ENCODE measurements at regions of chr17 and their contacts with region 1.

Region 1: GRCh38 chr17:82332669-82333278 is 792 bp downstream of the SECTM1 start:
- DNase-seq: peak; percentile 42
- ATAC-seq: peak; percentile 37
- H3K4me3 Mint-ChIP-seq: peak overlapping the region; percentile 66
- H3K27ac Mint-ChIP-seq: peak overlapping the region; percentile 43
- H3K4me1 Mint-ChIP-seq: peaks cover 31% of the 10 kb centered on the region
- H3K27me3 Mint-ChIP-seq: peaks cover 7% of the 10 kb centered on the region

Region 2: GRCh38 chr17:82193520-82194220 is 139.1 kb before region 1 on chr17:
- CTCF ChIA-PET with region 1: no interaction called
- POLR2A ChIA-PET with region 1: no interaction called
- DNase-seq: no peak
- ATAC-seq: no peak
- H3K4me3 Mint-ChIP-seq: no peak overlapping the region
- H3K27ac Mint-ChIP-seq: peak overlapping the region; percentile 60
- H3K4me1 Mint-ChIP-seq: peaks cover 31% of the 10 kb centered on the region
- H3K27me3 Mint-ChIP-seq: no peaks in the 10 kb centered on the region

Region 3: GRCh38 chr17:82257473-82257872 is 75.3 kb before region 1 on chr17:
- CTCF ChIA-PET with region 1: no interaction called
- POLR2A ChIA-PET with region 1: no interaction called
- DNase-seq: peak; percentile 55
- ATAC-seq: peak; percentile 91
- H3K4me3 Mint-ChIP-seq: no peak overlapping the region
- H3K27ac Mint-ChIP-seq: peak overlapping the region; percentile 71
- H3K4me1 Mint-ChIP-seq: peaks cover 10% of the 10 kb centered on the region
- H3K27me3 Mint-ChIP-seq: no peaks in the 10 kb centered on the region

Region 4: DNA sequence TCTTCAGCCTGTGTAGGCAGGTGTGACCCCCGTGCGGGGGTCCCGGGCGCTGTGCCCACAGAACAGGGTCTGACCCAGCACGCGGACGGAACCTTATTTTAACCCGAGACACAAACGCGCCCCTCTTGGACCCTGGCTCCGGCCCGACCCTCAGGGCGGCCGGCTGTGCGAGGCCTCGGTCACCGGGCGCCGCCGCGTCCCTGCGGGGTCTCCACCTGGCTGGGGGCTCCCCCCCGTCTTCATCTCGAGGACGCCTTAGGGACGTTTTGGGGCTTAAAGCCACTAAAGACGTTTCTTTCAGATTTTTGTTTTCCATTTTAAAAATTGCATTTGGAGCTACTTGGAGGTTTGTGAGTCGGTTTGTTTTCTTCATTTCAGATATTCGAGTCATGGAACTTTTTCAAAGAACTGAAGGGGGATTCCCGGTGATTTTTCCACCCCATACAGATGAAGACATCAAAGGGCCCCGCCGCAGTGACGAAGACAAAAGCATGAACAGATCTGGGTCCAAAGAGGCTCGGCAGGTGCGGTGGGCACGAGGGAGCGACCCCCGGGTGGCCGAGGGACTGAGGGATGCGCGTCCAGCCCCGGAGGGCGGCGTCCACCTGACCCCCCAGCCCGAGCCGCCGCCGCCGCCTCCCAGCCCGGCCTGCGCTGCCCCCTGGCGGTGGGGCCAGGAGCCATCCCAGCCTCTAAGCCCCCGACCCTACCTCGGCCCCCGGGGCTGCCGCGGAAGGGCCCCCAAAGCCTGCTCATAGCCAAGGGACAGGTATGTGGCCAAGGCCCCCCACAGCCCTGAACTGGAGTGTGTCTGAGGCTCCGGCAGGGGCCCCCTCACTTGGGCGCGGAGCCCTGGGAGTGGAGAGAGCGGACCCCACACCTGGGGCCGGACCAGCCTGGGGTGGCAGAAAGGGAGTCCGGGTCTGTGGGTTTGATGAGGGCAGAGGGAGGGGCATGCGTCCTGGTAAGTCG is 11.5 kb before region 1 on chr17:
- CTCF ChIA-PET with region 1: interaction called, 14 read pairs
- POLR2A ChIA-PET with region 1: no interaction called
- DNase-seq: peak; percentile 68
- ATAC-seq: peak; percentile 31
- H3K4me3 Mint-ChIP-seq: peak overlapping the region; percentile 64
- H3K27ac Mint-ChIP-seq: peak overlapping the region; percentile 77
- H3K4me1 Mint-ChIP-seq: peaks cover 28% of the 10 kb centered on the region
- H3K27me3 Mint-ChIP-seq: no peaks in the 10 kb centered on the region

Region 5: DNA sequence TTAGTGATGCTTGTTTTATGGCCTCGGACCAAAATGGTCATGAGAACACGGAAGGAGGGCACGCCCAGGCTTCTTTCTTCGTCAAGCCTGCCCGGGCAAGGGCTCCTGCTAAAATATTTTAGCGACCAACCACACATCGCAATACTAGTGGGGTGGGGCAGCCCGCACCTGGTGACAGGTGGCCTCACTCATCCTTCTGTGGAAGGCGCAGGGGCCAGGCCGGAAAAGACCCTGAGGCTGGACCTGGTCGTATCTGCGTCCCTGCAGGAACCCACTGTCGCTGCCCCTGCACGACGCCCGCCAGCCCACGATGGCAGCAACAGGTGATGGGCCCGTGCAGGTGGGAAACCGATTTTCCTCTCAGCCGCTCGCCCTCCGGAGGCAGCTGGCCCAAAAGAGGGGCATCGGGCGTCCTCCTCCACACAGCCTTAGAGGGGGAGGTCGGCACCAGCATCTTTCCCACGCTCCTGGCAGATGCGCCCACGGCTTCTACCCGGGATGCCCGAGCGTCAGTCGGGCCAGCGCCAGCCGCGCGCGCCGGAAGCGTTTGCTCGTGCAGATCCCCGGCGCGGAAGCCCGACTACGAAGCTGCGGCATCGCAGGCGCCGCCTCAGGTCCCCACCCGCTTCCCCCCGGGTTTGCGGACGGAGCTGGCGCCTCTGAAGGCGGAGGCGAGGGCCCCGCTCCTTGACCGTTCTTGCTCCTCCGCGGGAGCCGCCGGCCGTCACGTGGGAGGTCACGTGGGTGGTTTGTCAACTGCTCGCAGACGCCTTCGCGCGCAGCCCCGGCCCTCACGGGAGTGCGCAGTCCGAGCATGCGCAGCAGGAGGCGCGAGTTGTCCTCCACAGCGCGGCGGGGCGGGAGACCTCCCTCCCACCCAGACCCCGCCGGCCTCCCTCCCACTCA is 164.0 kb after region 1 on chr17:
- CTCF ChIA-PET with region 1: no interaction called
- POLR2A ChIA-PET with region 1: no interaction called
- DNase-seq: peak; percentile 93
- ATAC-seq: peak; percentile 71
- H3K4me3 Mint-ChIP-seq: peak overlapping the region; percentile 62
- H3K27ac Mint-ChIP-seq: peak overlapping the region; percentile 81
- H3K4me1 Mint-ChIP-seq: peaks cover 48% of the 10 kb centered on the region
- H3K27me3 Mint-ChIP-seq: no peaks in the 10 kb centered on the region